ENCODE measurements at regions of chr20 and their contacts with region 1.

Region 1: GRCh38 chr20:13819885-13820645 is 35.2 kb downstream of the NDUFAF5 start:
- DNase-seq: no peak
- ATAC-seq: peak; percentile 70
- H3K4me3 Mint-ChIP-seq: no peak overlapping the region
- H3K27ac Mint-ChIP-seq: no peak overlapping the region
- H3K4me1 Mint-ChIP-seq: no peaks in the 10 kb centered on the region
- H3K27me3 Mint-ChIP-seq: no peaks in the 10 kb centered on the region

Region 2: DNA sequence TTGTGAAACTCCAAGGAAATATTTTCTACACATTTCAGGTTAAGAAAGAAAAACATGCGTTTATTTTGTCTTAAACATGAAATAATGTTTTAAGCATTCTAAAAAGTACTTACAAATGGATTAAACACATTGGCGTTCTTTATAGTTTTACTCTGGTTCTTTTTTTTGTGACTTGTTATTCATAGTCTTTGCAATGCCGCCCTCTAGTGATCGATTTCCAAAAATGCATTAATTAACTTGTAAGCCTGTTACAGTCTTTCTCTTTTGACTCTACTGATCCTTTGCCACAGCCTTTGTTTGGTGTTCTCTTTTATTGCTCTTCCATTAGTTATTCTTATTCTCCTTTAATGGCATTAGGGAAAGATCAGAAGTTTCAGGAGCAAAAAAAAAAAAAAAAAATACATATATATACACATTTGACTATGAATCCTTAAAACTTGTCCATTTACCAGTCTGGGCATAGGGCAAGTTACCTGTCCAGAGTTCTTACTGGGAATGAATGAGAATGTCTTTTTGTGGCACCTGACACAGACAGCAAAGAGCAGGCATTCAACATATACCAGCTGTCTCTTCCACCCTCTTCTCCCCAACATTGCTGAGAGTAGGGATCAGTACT is 235.2 kb after region 1 on chr20:
- CTCF ChIA-PET with region 1: interaction called, 20 read pairs
- DNase-seq: no peak
- ATAC-seq: no peak
- H3K4me3 Mint-ChIP-seq: no peak overlapping the region
- H3K27ac Mint-ChIP-seq: no peak overlapping the region
- H3K4me1 Mint-ChIP-seq: no peaks in the 10 kb centered on the region
- H3K27me3 Mint-ChIP-seq: no peaks in the 10 kb centered on the region

Measured in activated CD8-positive, alpha-beta memory T cell treated with anti-CD3 and anti-CD28 coated beads, Interleukin-2, amount 10 ng/mL, durations not matched to agents 7 days and 5 days (primary cell).